Psoas muscle (tissue), 8 donors: ENCODE measurements at regions of chr6 and their contacts with region 1.

Region 1: DNA sequence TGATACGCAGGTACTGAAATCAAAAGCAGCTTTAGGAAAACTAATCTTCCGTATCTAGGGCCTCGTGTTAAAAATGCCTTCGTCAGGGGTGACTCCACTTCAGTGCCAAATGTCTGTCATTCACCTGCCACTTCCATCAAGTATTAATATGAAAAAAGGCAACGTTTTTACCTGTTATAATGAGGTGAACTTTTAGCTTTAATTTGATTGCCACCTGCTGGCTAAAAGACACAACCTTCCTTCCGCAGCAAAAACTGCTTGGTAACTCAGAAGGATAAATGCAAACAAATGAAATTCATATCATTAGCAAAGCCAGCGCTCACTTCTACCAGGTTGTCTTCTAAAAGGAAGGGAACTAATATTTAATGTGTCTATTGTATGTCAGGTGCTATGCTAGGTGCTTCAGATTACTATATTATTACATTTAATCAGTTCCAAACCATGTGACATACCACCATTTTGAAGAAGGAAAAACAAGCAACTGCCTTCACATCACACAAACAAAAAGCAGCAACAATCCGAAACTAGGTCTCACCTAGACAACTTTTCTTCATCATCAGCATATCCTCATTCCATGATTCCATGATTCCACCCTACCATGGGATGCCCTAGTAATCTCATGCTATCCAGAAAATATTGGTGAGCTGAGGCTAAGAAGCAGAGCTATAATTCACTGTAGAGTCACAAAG is 20.6 kb upstream of the ARHGAP18 start:
- DNase-seq: no peak
- ATAC-seq: peak; percentile 58 to 83 (median 62)
- H3K4me3 ChIP-seq: no peak overlapping the region
- H3K27ac ChIP-seq: no peak overlapping the region
- H3K4me1 ChIP-seq: no peaks in the 10 kb centered on the region
- H3K27me3 ChIP-seq: no peaks in the 10 kb centered on the region
- CTCF ChIP-seq: peak; percentile 80

Region 2: GRCh38 chr6:129621247-129621646 is 109.4 kb before region 1 on chr6:
- intact Hi-C with region 1: loop called (anchors 2 to 5 kb)
- DNase-seq: peak in 1 of 2 donors; percentile 58
- ATAC-seq: peak; percentile 65 to 91 (median 75)
- H3K4me3 ChIP-seq: no peak overlapping the region
- H3K27ac ChIP-seq: no peak overlapping the region
- H3K4me1 ChIP-seq: peaks cover 5% of the 10 kb centered on the region
- H3K27me3 ChIP-seq: no peaks in the 10 kb centered on the region
- CTCF ChIP-seq: peak; percentile 69